Gastrocnemius medialis (tissue), 4 donors: ENCODE measurements at regions of chr2 and their contacts with region 1.

Region 1: DNA sequence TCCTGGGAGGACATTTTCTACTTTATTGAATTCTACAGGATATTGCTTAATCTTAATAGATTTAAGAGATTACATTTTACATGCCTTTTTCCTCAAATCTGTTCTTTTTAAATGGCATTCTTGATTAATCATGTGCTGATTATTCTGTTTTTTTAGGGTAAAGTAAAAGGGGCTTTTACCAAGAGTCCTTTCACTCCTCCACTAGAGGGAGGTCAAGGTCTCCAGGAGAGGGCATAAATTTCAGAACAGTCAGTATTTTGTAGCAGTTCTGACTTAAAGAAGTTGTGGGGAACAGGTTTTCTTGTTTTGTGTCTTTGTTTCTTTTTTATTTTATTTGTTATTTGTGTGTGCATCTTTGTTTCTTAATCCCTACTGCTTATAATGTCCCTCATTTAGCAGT is 25.4 kb downstream of the WDR75 start:
- DNase-seq: no peak
- ATAC-seq: peak; percentile 69 to 77
- H3K4me3 ChIP-seq: no peak overlapping the region
- H3K27ac ChIP-seq: no peak overlapping the region
- H3K4me1 ChIP-seq: peaks cover 5 to 17% of the 10 kb centered on the region in 2 donors
- H3K27me3 ChIP-seq: no peaks in the 10 kb centered on the region
- CTCF ChIP-seq: peak in 4 of 5 experiments; percentile 50 to 70 (median 63)
- POLR2A ChIP-seq: no peak

Region 2: GRCh38 chr2:189569295-189569910 is 102.7 kb after region 1 on chr2:
- in situ Hi-C with region 1: no loop called
- intact Hi-C with region 1: loop called (anchors 5 kb)
- DNase-seq: no peak
- ATAC-seq: no peak
- H3K4me3 ChIP-seq: no peak overlapping the region
- H3K27ac ChIP-seq: peak overlapping the region; percentile 35 to 57 (median 54)
- H3K4me1 ChIP-seq: peaks cover 10 to 46% of the 10 kb centered on the region in 2 donors
- H3K27me3 ChIP-seq: no peaks in the 10 kb centered on the region
- CTCF ChIP-seq: no peak
- POLR2A ChIP-seq: no peak

Region 3: GRCh38 chr2:189635353-189635752 is 168.7 kb after region 1 on chr2:
- in situ Hi-C with region 1: no loop called
- intact Hi-C with region 1: loop called (anchors 2 kb)
- DNase-seq: no peak
- ATAC-seq: no peak
- H3K4me3 ChIP-seq: no peak overlapping the region
- H3K27ac ChIP-seq: no peak overlapping the region
- H3K4me1 ChIP-seq: no peaks in the 10 kb centered on the region
- H3K27me3 ChIP-seq: no peaks in the 10 kb centered on the region
- CTCF ChIP-seq: no peak
- POLR2A ChIP-seq: no peak